ENCODE measurements at regions of chr4 and their contacts with region 1.

Region 1: DNA sequence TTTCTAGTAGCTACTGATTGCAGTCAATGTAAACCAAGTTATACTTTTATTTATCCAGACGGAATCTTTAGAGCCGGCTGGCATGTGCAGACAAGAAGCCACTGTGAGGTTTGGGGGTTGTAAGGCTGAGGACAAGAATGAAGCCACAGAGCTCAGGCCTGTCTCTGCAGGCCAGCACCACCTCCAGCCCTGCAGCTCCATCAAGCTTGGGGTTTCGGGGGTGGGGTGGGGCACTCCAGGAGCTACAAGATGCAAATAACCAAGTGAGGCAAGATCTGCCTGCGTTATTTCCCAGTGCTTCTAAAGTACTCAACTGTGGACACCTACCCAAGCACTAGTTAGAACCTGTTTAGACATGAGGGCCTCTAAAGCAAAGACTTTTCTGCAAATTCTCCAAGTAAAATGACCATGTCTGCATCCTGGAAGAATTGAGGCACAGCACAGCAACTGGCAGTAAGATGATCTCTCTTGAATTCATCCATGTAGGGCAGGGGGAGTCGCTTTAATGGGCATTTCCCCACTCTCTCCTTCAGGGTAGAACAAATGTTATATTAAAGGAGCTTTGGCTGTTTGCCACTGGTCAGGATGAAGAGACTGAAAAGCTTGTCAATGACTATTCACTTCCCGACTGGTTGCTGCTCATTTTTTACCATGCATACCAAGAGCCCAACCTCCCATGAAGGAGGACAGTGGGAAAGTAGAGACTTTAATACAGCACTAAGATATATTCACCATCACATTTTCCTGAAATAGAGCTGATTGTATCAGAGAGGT is 222.5 kb downstream of the MGST2 start:
- DNase-seq: peak; percentile 97
- H3K4me3 ChIP-seq: peak overlapping the region in 2 of 3 experiments; percentile 49 to 54
- H3K27ac ChIP-seq: peak overlapping the region; percentile 84
- H3K4me1 ChIP-seq: peaks cover 41% of the 10 kb centered on the region
- H3K27me3 ChIP-seq: no peaks in the 10 kb centered on the region
- CTCF ChIP-seq: no peak

Region 2: DNA sequence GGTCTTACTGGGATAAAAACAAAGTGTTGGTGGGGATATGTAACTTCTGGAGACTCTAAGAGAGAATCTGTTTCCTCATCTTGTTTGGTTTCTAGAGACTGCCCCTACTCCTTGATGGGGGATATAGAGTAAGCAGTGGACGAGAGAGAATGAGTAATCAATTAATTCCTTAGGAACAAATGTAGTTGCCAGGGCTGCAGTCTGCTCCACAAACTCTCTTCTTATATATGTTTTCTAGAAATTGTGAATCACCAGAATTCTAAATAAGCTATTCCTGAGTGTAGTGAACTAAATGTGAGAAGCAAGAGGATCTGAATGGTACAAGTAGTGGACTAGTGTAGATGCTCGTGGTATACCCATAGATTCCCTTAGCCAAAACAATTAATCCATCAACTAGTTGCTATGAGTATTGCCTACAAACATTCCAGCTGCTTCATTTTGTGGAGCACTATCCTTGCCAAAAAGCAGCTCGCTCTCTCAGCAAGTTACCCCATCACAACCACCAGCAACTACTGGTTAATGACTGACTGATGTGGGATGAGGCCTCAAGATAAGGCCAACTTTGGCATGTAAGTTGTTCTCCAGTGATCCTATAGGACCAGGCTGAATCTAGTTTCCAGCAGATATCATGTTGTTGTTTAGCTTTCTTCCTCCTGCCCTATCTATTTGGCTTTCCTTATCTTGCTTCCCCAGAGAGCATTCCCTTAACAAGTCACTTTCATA is 1919.0 kb before region 1 on chr4:
- CTCF ChIA-PET with region 1: no interaction called
- dilution Hi-C with region 1: no loop called
- in situ Hi-C with region 1: no loop called
- intact Hi-C with region 1: no loop called
- DNase-seq: no peak
- H3K4me3 ChIP-seq: no peak overlapping the region
- H3K27ac ChIP-seq: no peak overlapping the region
- H3K4me1 ChIP-seq: no peaks in the 10 kb centered on the region
- H3K27me3 ChIP-seq: no peaks in the 10 kb centered on the region
- CTCF ChIP-seq: no peak

Region 3: DNA sequence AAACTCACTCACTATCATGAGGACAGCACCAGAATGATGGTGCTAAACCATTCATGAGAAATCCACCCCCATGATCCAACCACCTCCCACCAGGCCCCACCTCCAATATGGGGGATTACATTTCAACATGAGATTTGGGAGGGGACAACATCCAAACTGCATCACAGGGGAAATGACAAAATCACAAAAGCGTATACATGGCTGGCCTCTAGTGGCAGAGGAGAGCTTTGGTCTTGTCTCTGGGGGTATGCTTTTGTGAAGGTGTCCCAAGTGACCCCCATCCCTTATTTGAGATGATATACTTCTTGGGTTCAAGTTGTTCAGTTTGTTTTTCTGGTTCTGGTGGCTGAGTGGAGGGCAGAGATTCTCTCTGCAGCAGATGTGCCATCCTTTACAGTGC is 323.6 kb before region 1 on chr4:
- CTCF ChIA-PET with region 1: no interaction called
- dilution Hi-C with region 1: no loop called
- in situ Hi-C with region 1: no loop called
- intact Hi-C with region 1: no loop called
- DNase-seq: no peak
- H3K4me3 ChIP-seq: no peak overlapping the region
- H3K27ac ChIP-seq: no peak overlapping the region
- H3K4me1 ChIP-seq: peaks cover 9% of the 10 kb centered on the region
- H3K27me3 ChIP-seq: no peaks in the 10 kb centered on the region
- CTCF ChIP-seq: peak in 1 of 2 donors; percentile 17

Region 4: DNA sequence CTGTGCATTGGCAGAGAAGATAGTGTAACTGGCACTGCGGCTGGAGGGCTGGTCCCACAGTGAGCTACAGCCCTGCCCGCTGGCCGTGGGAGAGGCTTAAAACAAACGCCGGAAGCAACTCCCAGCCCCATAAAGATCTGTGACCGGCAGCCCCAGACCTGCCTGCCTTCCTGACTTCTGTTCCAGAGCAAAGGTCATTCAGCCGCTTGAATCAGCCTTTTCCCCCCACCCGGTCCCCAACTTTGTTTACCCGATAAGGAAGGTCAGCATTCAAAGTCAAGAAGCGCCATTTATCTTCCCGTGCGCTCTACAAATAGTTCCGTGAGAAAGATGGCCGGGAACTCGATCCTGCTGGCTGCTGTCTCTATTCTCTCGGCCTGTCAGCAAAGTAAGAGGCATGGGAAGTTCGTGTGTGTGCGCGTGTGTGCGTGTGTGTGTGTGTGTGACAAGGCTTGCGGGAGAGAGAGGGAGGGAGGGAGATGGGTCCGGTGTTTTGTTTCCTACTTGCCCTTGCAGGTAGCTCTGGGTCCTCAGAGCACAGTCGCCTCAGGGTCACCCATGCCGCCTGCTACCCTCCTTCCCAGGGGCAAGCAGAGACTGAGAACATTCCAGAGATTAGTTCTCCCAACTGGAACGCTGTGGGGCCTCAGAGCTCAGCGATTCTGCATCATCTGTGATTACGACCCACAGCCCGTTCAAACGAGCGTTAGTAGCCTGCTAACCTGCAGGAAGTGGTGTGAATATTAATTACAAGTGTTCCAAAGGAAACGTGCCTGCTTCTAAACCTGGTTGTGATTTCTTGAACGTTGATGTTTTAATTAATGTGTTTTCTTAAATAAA is 222.2 kb before region 1 on chr4 and contains the start of gene MGST2:
- CTCF ChIA-PET with region 1: no interaction called
- dilution Hi-C with region 1: no loop called
- in situ Hi-C with region 1: no loop called
- intact Hi-C with region 1: loop called (anchors 10 kb)
- DNase-seq: peak; percentile 61
- H3K4me3 ChIP-seq: peak within 1 kb of the TSS; percentile 56 to 66 (median 62)
- H3K27ac ChIP-seq: peak within 1 kb of the TSS; percentile 58
- H3K4me1 ChIP-seq: peaks cover 13% of the 10 kb centered on the region
- H3K27me3 ChIP-seq: no peaks in the 10 kb centered on the region
- CTCF ChIP-seq: no peak
- total RNA-seq, gene MGST2: 14.7 to 15.8 TPM

Region 5: DNA sequence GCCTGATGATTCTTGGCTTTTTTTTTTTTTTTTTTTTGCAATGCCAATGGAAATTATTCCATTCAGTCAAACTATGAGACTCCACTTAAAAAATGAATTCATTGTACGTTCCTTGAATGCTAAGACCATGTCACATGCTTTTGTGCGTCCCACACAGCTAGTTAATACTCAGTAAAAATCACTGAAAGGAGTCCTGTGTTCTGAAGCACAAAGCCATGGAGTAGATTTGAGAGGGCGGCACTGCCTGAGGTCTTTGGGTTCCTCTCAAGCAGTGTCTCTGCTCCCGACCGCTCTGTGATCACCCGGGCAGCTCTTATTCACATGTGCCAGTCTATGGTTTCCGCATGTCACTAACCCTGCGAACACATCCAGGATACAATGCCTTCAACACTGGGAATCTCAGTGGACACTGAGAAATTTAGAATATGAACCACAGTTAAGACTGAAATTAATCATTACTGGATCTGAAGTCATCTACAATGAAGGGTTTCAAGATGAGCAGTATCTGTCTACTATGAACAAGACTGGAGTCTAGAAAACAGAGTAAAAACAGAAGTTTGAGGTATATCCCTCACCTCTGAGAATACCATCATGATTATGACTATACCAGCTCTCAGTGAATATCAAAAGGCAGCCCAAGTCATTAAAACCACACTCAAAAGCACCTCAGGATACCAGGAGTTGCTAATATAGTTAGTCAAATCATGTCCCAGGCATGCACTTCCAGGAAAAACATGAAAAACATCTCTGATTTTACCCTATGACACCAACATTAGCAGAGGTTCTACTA is 29.5 kb before region 1 on chr4:
- CTCF ChIA-PET with region 1: no interaction called
- dilution Hi-C with region 1: no loop called
- in situ Hi-C with region 1: no loop called
- intact Hi-C with region 1: no loop called
- DNase-seq: no peak
- H3K4me3 ChIP-seq: no peak overlapping the region
- H3K27ac ChIP-seq: no peak overlapping the region
- H3K4me1 ChIP-seq: no peaks in the 10 kb centered on the region
- H3K27me3 ChIP-seq: no peaks in the 10 kb centered on the region
- CTCF ChIP-seq: no peak

Region 6: GRCh38 chr4:139872274-139872673 is 15.9 kb before region 1 on chr4:
- CTCF ChIA-PET with region 1: no interaction called
- dilution Hi-C with region 1: no loop called
- in situ Hi-C with region 1: no loop called
- intact Hi-C with region 1: loop called (anchors 1 kb)
- DNase-seq: peak; percentile 94
- H3K4me3 ChIP-seq: no peak overlapping the region
- H3K27ac ChIP-seq: peak overlapping the region; percentile 66
- H3K4me1 ChIP-seq: peaks cover 18% of the 10 kb centered on the region
- H3K27me3 ChIP-seq: no peaks in the 10 kb centered on the region
- CTCF ChIP-seq: no peak